Heart right ventricle (tissue), 16 donors: ENCODE measurements at regions of chr6 and their contacts with region 1.

Region 1: DNA sequence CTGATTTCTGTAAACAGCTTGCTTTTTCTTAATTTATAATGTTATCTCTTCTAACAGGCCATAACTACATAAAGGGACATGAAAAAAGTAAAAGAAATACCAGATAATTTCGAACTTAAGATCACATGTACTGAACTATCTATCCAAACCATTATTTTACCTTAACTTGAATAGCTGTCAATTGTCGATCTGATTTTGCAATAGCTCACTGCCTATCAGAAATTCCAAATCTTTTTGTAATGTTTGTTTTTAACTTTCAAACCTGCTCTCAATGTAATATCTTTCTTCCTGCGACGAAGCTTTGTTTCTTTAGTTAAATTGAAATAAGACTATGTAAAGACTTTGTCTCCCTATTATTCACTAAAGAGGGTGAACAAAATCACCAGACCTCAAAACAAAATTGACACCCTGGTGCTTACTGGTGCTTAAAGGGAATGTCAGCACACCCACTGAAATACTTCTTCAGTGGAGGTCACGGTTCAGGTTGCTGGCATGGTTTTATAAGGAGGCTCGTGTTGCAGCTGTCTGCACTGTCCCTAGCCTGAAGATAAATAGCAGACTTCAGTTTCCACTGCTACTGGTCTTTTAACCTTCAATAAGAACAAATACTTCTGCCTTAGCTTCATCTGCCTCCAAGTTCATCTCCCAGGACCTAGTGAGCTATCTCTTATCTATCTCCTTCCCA is 117.5 kb upstream of the QKI start:
- DNase-seq: no peak
- ATAC-seq: peak; percentile 57 to 88 (median 76)
- H3K4me3 ChIP-seq: no peak overlapping the region
- H3K27ac ChIP-seq: peak overlapping the region in 8 of 10 donors; percentile 13 to 71 (median 40)
- H3K4me1 ChIP-seq: peaks cover 0 to 34% (median 8%) of the 10 kb centered on the region in 9 donors
- H3K27me3 ChIP-seq: no peaks in the 10 kb centered on the region
- CTCF ChIP-seq: no peak

Region 2: GRCh38 chr6:163152701-163153100 is 144.3 kb before region 1 on chr6:
- intact Hi-C with region 1: no loop called
- DNase-seq: no peak
- ATAC-seq: no peak
- H3K4me3 ChIP-seq: no peak overlapping the region
- H3K27ac ChIP-seq: no peak overlapping the region
- H3K4me1 ChIP-seq: no peaks in the 10 kb centered on the region
- H3K27me3 ChIP-seq: no peaks in the 10 kb centered on the region
- CTCF ChIP-seq: no peak

Region 3: GRCh38 chr6:163207431-163208383 is 89.3 kb before region 1 on chr6:
- intact Hi-C with region 1: loop called in 2 of 10 experiments (anchors 5 to 10 kb)
- DNase-seq: no peak
- ATAC-seq: no peak
- H3K4me3 ChIP-seq: no peak overlapping the region
- H3K27ac ChIP-seq: peak overlapping the region in 5 of 10 donors; percentile 7 to 87 (median 47)
- H3K4me1 ChIP-seq: peaks cover 0 to 5% (median 0%) of the 10 kb centered on the region in 9 donors
- H3K27me3 ChIP-seq: no peaks in the 10 kb centered on the region
- CTCF ChIP-seq: no peak

Region 4: DNA sequence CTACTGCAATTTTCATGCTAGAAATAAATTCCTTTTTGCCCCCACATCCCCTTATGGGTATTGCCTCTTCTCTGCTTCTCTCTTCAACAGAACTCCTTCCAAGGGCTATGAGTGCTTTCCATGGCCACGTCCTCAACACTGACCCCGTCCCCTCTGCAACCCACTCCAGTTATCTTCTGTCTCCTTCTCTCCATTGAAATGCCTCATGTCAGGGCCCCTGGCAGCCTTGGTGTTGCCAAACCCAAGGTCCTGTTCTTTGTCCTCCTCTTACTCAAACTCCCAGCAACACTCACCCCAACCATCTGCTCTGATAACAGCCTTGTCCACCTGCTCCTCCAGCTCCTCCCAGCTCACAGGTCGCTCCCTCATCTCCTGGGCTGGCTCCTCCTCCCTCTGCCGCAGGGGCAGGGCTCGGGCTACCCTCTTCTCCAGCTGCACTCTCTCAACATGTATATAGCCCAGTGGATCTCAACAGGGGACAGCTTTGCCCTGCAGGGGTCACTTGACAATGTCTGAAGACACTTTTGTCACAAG is 78.5 kb before region 1 on chr6:
- intact Hi-C with region 1: loop called in 1 of 10 experiments (anchors 10 kb)
- DNase-seq: no peak
- ATAC-seq: peak in 3 of 8 donors; percentile 24 to 74 (median 50)
- H3K4me3 ChIP-seq: no peak overlapping the region
- H3K27ac ChIP-seq: no peak overlapping the region
- H3K4me1 ChIP-seq: peaks cover 0 to 27% (median 4%) of the 10 kb centered on the region in 9 donors
- H3K27me3 ChIP-seq: no peaks in the 10 kb centered on the region
- CTCF ChIP-seq: no peak

Region 5: GRCh38 chr6:163252061-163252591 is 44.9 kb before region 1 on chr6:
- intact Hi-C with region 1: no loop called
- DNase-seq: no peak
- ATAC-seq: peak in 1 of 8 donors; percentile 53
- H3K4me3 ChIP-seq: no peak overlapping the region
- H3K27ac ChIP-seq: no peak overlapping the region
- H3K4me1 ChIP-seq: peaks cover 0 to 17% (median 6%) of the 10 kb centered on the region in 9 donors
- H3K27me3 ChIP-seq: no peaks in the 10 kb centered on the region
- CTCF ChIP-seq: no peak